K562 (cell line): ENCODE measurements at regions of chr4 and their contacts with region 1.

Region 1: GRCh38 chr4:109406338-109406931 is 27.2 kb upstream of the SEC24B start:
- DNase-seq: peak; percentile 36 to 67 (median 44)
- ATAC-seq: peak; percentile 93
- H3K4me3 ChIP-seq: no peak overlapping the region
- H3K27ac ChIP-seq: no peak overlapping the region
- H3K4me1 ChIP-seq: no peaks in the 10 kb centered on the region
- H3K27me3 ChIP-seq: peaks cover 0 to 9% of the 10 kb centered on the region in 2 experiments; a peak in 3 of 5 replicates
- CTCF ChIP-seq: peak; percentile 53 to 81 (median 67); a peak in 5 of 6 replicates
- EP300 ChIP-seq: no peak
- POLR2A ChIP-seq: no peak
- RAD21 ChIP-seq: peak; percentile 82 to 86

Region 2: GRCh38 chr4:108030332-108030731 is 1376.1 kb before region 1 on chr4:
- CTCF ChIA-PET with region 1: no interaction called
- POLR2A ChIA-PET with region 1: no interaction called
- in situ Hi-C with region 1: no loop called
- intact Hi-C with region 1: loop called (anchors 10 kb)
- DNase-seq: peak; percentile 40 to 69 (median 43)
- ATAC-seq: peak; percentile 97
- H3K4me3 ChIP-seq: no peak overlapping the region
- H3K27ac ChIP-seq: no peak overlapping the region
- H3K4me1 ChIP-seq: no peaks in the 10 kb centered on the region
- H3K27me3 ChIP-seq: no peaks in the 10 kb centered on the region
- CTCF ChIP-seq: peak; percentile 66 to 70 (median 67)
- EP300 ChIP-seq: no peak
- POLR2A ChIP-seq: no peak
- RAD21 ChIP-seq: peak in 1 of 2 experiments; percentile 72; a peak in 2 of 4 replicates

Region 3: GRCh38 chr4:108570993-108571569 is 835.4 kb before region 1 on chr4:
- CTCF ChIA-PET with region 1: no interaction called
- POLR2A ChIA-PET with region 1: no interaction called
- in situ Hi-C with region 1: no loop called
- intact Hi-C with region 1: no loop called
- DNase-seq: no peak
- ATAC-seq: no peak
- H3K4me3 ChIP-seq: no peak overlapping the region
- H3K27ac ChIP-seq: no peak overlapping the region
- H3K4me1 ChIP-seq: no peaks in the 10 kb centered on the region
- H3K27me3 ChIP-seq: peaks cover 8 to 15% of the 10 kb centered on the region in 2 experiments; a peak in 3 of 5 replicates
- CTCF ChIP-seq: no peak
- EP300 ChIP-seq: no peak
- POLR2A ChIP-seq: no peak
- RAD21 ChIP-seq: no peak

Region 4: DNA sequence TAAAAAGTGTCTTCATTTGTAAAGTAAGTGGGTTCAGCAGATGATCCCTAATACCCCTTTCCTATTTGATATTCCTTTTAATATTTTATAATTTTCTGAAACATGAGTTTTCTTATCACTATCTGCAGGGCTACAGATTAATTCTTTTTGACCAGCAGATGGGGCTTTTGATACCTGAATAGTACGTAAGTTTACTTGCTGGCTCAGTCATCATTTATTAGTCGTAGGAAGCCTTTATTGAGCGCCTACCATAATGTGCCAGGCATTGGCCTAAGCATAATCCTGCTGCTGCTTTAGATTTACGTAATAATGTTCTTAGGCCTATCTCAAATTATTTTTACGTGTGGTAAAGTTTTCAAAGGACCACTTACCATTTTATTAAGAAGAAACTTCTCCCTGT is 723.0 kb before region 1 on chr4:
- CTCF ChIA-PET with region 1: interaction called, 5 read pairs
- POLR2A ChIA-PET with region 1: no interaction called
- in situ Hi-C with region 1: no loop called
- intact Hi-C with region 1: loop called (anchors 5 kb)
- DNase-seq: peak in 1 of 4 experiments; percentile 30
- ATAC-seq: peak; percentile 63
- H3K4me3 ChIP-seq: no peak overlapping the region
- H3K27ac ChIP-seq: no peak overlapping the region
- H3K4me1 ChIP-seq: no peaks in the 10 kb centered on the region
- H3K27me3 ChIP-seq: no peaks in the 10 kb centered on the region
- CTCF ChIP-seq: peak in 1 of 3 experiments; percentile 56; a peak in 3 of 6 replicates
- EP300 ChIP-seq: no peak
- POLR2A ChIP-seq: no peak
- RAD21 ChIP-seq: peak; percentile 54 to 60

Region 5: DNA sequence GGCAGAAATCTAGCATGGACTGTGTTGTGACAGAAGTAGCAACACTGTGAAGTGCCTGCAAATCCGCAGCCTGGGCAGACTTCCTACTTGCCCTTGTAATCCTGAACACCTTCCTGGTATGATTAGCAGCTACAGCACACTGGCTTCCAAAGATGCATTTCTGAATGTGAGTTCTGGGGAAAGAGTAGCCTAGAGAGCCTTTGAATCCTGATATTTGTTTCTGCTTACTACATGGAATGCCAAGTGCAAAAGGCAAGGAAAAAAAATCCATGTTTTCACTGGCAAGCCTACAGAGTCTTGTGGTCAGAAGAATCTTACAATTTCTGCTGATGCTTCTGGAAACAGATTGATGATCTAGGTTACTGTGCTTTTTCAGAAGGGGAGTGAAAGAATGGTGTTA is 327.7 kb before region 1 on chr4:
- CTCF ChIA-PET with region 1: no interaction called
- POLR2A ChIA-PET with region 1: no interaction called
- in situ Hi-C with region 1: no loop called
- intact Hi-C with region 1: loop called (anchors 10 kb)
- DNase-seq: no peak
- ATAC-seq: no peak; the same call in 2 of the 3 replicates
- H3K4me3 ChIP-seq: no peak overlapping the region
- H3K27ac ChIP-seq: no peak overlapping the region
- H3K4me1 ChIP-seq: no peaks in the 10 kb centered on the region; a peak in 1 of 5 replicates
- H3K27me3 ChIP-seq: no peaks in the 10 kb centered on the region
- CTCF ChIP-seq: no peak
- EP300 ChIP-seq: no peak
- POLR2A ChIP-seq: no peak
- RAD21 ChIP-seq: no peak

Region 6: DNA sequence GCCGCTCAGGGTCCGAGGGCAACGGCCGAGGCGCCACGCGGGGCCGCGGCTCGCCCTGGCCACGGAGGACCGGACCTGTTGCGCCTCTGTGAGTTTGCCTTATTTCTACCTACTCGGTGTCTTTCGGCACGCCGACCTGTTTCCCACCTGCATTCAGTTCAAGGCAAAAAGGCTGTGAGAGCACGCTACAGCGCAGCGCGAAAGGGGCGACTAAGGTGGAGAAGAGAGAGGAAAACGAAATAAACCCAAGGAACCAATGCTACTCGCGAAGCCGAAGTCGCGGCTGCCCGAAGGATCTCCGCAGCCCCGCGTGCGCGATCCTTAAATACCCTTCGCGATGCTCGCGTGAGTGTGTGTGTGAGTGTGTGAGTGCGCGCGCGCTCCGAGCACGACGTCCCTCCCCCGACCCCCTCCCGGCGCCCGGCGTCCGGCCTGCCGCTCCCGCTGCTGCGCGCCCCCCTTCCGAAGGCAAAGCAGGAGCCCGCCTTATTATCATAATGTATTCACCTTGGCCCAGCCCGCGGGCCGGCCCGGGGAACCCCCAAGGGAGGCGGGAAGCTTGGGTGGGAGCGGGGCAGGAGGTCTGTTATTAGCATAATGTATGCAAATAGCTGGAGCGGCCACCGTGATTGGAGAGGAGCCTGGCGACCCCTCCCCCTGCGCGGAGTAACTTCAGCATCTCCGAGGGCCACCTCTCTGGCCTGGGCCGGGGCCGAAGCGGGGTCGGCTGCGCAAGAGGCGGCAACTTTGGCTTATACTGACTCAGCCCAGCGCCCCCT is 103.9 kb before region 1 on chr4 and contains the start of gene COL25A1:
- CTCF ChIA-PET with region 1: no interaction called
- POLR2A ChIA-PET with region 1: no interaction called
- in situ Hi-C with region 1: no loop called
- intact Hi-C with region 1: loop called (anchors 5 kb)
- DNase-seq: no peak
- ATAC-seq: no peak
- H3K4me3 ChIP-seq: no peak within 1 kb of the TSS
- H3K27ac ChIP-seq: no peak within 1 kb of the TSS
- H3K4me1 ChIP-seq: no peaks in the 10 kb centered on the region; a peak in 1 of 5 replicates
- H3K27me3 ChIP-seq: no peaks in the 10 kb centered on the region; a peak in 1 of 5 replicates
- CTCF ChIP-seq: no peak
- EP300 ChIP-seq: no peak
- POLR2A ChIP-seq: no peak
- RAD21 ChIP-seq: no peak
- polyA plus RNA-seq, gene COL25A1: 0.07 to 0.17 TPM

Region 7: GRCh38 chr4:109332926-109333464 is 73.4 kb before region 1 on chr4:
- CTCF ChIA-PET with region 1: no interaction called
- POLR2A ChIA-PET with region 1: no interaction called
- in situ Hi-C with region 1: no loop called
- intact Hi-C with region 1: loop called (anchors 5 kb)
- DNase-seq: peak; percentile 17 to 54 (median 32)
- ATAC-seq: peak; percentile 97
- H3K4me3 ChIP-seq: no peak overlapping the region
- H3K27ac ChIP-seq: no peak overlapping the region
- H3K4me1 ChIP-seq: no peaks in the 10 kb centered on the region
- H3K27me3 ChIP-seq: no peaks in the 10 kb centered on the region
- CTCF ChIP-seq: peak; percentile 72 to 81 (median 76)
- EP300 ChIP-seq: no peak
- POLR2A ChIP-seq: no peak
- RAD21 ChIP-seq: peak; percentile 54 to 75

Region 8: DNA sequence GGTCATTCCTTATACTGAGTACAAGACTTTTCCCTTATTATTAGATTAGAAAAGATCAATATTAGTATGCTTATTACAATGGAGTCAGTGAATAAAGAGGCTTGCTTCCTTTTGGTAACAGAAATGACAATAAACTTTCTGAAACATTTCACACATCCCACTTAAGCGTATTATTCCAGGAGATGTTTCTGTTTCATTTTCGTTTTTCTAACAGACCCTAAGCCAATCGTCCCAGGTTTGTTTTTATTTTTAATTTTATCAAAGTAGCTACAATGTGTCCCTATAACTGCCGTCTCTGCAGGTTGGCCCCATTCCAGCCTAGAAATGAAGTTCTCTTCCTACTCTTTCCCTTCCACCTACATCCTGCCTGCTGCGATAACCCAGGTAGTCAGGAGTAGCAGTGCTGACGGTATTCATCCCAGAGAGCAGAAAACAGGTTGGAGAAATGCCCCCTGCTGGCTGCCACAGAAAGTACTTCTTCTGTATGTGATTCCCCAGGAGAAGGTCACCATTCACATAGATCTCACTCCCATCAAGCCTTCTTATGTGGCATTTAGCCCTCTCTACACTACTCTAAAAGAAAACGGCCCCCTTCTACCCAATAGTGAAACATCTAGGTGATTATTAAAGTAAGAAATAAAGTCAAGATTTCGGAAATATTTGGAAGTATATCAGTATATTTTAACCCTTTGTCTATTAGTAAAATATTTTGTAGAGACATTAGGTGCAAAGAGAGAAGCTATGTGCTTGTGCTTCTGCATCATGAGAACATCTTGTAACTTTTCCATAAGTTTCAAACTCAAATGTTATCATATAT is 1109.9 kb after region 1 on chr4:
- CTCF ChIA-PET with region 1: no interaction called
- POLR2A ChIA-PET with region 1: no interaction called
- in situ Hi-C with region 1: loop called (anchors 25 kb)
- intact Hi-C with region 1: no loop called
- DNase-seq: peak; percentile 44 to 67 (median 51)
- ATAC-seq: peak; percentile 97
- H3K4me3 ChIP-seq: no peak overlapping the region
- H3K27ac ChIP-seq: no peak overlapping the region
- H3K4me1 ChIP-seq: no peaks in the 10 kb centered on the region
- H3K27me3 ChIP-seq: no peaks in the 10 kb centered on the region
- CTCF ChIP-seq: peak; percentile 69 to 81 (median 76)
- EP300 ChIP-seq: no peak
- POLR2A ChIP-seq: no peak
- RAD21 ChIP-seq: peak; percentile 31 to 48